Right cardiac atrium (tissue), 5 donors: ENCODE measurements at regions of chr7 and their contacts with region 1.

Region 1: GRCh38 chr7:48402721-48403120 is 231.5 kb downstream of the ABCA13 start:
- DNase-seq: no peak
- ATAC-seq: no peak
- H3K4me3 ChIP-seq: no peak overlapping the region
- H3K27ac ChIP-seq: no peak overlapping the region
- H3K4me1 ChIP-seq: no peaks in the 10 kb centered on the region
- H3K27me3 ChIP-seq: no peaks in the 10 kb centered on the region

Region 2: GRCh38 chr7:48454750-48455192 is 52.0 kb after region 1 on chr7:
- intact Hi-C with region 1: loop called in 1 of 4 experiments (anchors 5 kb)
- DNase-seq: peak in 2 of 3 donors; percentile 18 to 36
- ATAC-seq: peak in 1 of 2 donors; percentile 43
- H3K4me3 ChIP-seq: no peak overlapping the region
- H3K27ac ChIP-seq: no peak overlapping the region
- H3K4me1 ChIP-seq: no peaks in the 10 kb centered on the region
- H3K27me3 ChIP-seq: no peaks in the 10 kb centered on the region